ENCODE measurements at regions of chr1 and their contacts with region 1.

Region 1: DNA sequence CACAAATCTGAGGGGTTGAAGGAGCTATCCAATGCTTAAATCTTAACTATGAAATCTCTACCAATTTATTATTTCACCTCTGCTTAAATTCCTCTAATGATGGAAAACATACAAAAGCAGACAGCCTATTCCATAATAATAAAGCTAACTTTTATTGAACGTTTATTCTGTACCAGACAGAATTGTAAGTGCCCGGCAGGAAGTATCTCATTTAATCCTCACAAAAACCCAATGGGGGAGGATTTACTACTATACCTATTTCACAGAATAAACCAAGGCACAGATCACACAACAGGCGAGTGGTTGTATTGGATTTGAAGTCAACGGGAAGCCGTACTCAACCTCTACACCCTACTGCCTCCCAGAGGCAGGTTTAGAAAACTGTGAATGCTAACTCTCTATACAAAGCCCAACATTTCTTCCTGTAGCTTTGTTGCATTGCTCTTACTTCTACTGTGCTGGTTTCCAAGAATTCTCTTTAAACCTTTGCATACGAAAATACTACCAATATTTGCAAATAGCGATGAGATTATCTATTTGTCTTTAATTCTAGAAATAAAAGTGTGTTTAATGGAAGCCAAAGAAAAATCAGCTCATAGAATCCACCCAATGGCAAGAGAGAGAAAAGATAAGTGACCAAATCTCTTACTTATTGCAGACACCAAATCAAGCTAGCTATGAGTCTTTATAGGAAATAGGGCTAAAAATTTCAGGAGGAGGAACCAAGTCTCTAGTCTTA is 33.5 kb upstream of the C1orf53 start:
- DNase-seq: peak; percentile 40
- H3K4me3 ChIP-seq: no peak overlapping the region
- H3K27ac ChIP-seq: no peak overlapping the region
- H3K4me1 ChIP-seq: peaks cover 3% of the 10 kb centered on the region
- H3K27me3 ChIP-seq: no peaks in the 10 kb centered on the region
- CTCF ChIP-seq: peak; percentile 62

Region 2: DNA sequence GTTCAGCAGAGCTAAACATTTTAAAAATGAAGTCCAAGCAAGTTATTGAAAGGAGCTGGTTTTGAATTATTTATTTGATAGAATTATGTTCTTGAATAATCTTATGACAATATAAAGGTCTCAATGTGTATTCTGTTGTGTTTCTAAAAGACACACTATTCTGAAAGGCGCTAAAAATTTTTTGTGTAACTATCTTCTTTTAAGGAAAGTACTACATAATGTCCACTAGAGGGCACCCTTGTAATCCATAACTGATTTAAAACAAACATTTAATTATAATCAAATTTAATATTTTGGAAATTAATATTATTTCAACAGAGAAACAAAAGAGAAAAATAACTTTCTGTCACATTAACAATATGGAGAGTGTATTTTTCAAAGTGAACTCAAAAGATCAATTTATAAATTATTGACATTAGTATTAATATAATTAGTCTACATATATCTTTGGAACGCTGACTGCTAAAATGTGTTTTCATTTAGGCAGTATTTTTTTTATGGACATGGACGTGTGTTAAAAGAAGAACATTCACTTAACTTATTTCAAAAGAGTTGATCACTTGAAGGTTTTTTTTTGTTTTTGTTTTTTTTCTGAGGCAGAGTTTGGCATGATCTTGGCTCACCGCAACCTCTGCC is 342.1 kb before region 1 on chr1:
- intact Hi-C with region 1: loop called (anchors 5 kb)
- DNase-seq: no peak
- H3K4me3 ChIP-seq: no peak overlapping the region
- H3K27ac ChIP-seq: no peak overlapping the region
- H3K4me1 ChIP-seq: no peaks in the 10 kb centered on the region
- H3K27me3 ChIP-seq: no peaks in the 10 kb centered on the region
- CTCF ChIP-seq: peak; percentile 75

Region 3: DNA sequence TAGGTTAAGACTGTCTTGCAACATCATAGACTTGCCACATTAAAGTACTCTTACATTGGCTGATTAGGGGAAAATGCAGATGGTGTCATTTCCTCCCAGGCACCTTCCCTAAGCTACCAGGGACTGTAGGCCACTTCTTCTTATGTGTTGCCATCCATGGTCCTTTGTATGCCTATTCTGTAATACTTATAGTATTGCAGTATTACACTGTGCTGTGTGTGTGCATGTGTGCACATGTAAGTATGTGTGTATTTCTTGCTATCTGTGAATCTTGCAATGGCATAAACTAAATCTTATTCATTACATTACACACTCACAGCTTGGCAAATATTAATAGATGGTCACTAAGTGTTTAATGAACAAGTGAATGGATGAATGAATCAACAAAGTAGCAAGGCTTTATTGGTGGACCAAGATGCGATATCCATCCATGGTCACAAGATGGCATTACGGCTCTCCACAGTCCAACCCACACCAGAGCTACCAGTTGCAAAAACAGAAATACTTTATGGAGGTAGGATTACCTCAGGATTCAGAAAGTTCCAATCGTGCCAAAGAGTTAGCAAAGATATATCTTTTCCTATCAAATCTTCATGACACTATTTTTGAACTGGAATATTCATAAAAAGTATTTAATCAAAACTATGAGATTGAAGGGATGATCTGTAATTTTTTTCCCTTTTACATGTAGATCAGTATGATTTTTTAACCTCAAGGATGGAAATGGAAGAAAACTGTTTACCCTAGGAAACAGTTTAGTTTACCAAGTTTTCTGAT is 253.8 kb before region 1 on chr1:
- intact Hi-C with region 1: loop called (anchors 5 kb)
- DNase-seq: peak; percentile 31
- H3K4me3 ChIP-seq: no peak overlapping the region
- H3K27ac ChIP-seq: no peak overlapping the region
- H3K4me1 ChIP-seq: peaks cover 3% of the 10 kb centered on the region
- H3K27me3 ChIP-seq: no peaks in the 10 kb centered on the region
- CTCF ChIP-seq: peak; percentile 30

Region 4: DNA sequence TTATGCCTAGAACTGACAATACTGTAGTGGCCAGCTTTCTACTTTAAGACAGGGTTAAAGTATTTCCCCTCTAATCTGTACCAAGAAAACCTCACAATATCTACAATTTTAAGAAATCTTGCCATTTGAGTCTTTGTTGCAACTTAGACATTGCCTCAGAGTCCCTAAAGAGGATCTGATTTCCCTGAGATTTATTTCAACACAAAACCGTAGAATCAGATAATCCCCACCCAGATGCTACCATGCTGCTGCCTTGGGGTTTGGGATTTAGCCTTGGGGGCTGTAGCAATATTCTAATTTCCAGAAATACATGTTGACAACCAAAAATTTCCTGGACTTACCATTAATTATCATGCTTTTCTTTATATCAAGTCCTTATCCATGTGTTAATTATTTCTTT is 43.4 kb before region 1 on chr1:
- intact Hi-C with region 1: no loop called
- DNase-seq: no peak
- H3K4me3 ChIP-seq: no peak overlapping the region
- H3K27ac ChIP-seq: no peak overlapping the region
- H3K4me1 ChIP-seq: no peaks in the 10 kb centered on the region
- H3K27me3 ChIP-seq: no peaks in the 10 kb centered on the region
- CTCF ChIP-seq: no peak

Measured in colonic mucosa (tissue), 4 donors.